ENCODE measurements at regions of chr16 and their contacts with region 1.

Region 1: DNA sequence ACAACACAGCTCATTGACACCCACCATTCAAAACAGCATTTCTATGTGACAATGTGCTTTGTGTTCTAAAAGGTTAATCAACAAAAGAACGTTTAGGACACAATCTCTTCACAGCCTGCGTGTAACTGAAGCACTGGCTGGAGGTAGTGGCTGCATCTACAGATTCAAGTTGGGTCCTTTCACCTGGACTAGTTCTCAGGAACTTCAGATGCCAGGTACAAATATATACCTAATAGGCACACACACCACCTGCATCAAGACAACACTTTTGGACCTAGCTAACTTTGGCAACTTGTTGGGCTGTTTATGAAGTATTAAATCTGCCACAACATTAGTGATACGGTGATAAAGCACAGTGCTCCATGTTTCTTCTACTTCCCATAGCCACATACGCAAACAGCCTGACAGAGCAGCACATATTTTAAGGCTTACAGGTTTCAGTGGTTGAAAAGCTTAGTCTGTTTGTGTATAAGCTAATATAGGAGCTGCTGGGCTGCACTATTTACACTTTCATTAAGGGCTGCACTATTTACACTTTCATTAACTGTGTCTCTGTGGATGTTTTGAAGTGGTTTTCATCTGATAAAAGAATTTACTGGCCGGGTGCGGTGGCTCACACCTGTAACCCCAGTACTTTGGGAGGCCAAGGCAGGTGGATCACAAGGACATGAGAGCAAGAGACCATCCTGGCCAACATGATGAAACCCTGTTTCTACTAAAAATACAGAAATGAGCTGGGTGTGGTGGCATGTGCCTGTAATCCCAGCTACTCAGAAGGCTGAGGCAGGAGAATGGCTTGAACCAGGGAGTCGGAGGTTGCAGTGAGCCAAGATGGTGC is 132.6 kb downstream of the PARN start:
- DNase-seq: no peak
- ATAC-seq: no peak
- H3K4me3 ChIP-seq: no peak overlapping the region
- H3K4me3 Mint-ChIP-seq: no peak overlapping the region
- H3K27ac ChIP-seq: no peak overlapping the region
- H3K27ac Mint-ChIP-seq: peak overlapping the region in 1 of 2 donors; percentile 50
- H3K4me1 ChIP-seq: peaks cover 17% of the 10 kb centered on the region
- H3K4me1 Mint-ChIP-seq: peaks cover 62 to 73% of the 10 kb centered on the region in 2 donors
- H3K27me3 ChIP-seq: no peaks in the 10 kb centered on the region
- H3K27me3 Mint-ChIP-seq: no peaks in the 10 kb centered on the region
- CTCF ChIP-seq: no peak

Region 2: GRCh38 chr16:14549789-14550153 is 52.3 kb after region 1 on chr16:
- intact Hi-C with region 1: loop called (anchors 10 kb)
- DNase-seq: no peak
- ATAC-seq: no peak
- H3K4me3 ChIP-seq: no peak overlapping the region
- H3K4me3 Mint-ChIP-seq: no peak overlapping the region
- H3K27ac ChIP-seq: no peak overlapping the region
- H3K27ac Mint-ChIP-seq: peak overlapping the region in 1 of 2 donors; percentile 24
- H3K4me1 ChIP-seq: no peaks in the 10 kb centered on the region
- H3K4me1 Mint-ChIP-seq: peaks cover 14 to 15% of the 10 kb centered on the region in 2 donors
- H3K27me3 ChIP-seq: no peaks in the 10 kb centered on the region
- H3K27me3 Mint-ChIP-seq: no peaks in the 10 kb centered on the region
- CTCF ChIP-seq: no peak